ENCODE measurements at regions of chr21 and their contacts with region 1.

Region 1: GRCh38 chr21:29217818-29218291 is 80.9 kb upstream of the BACH1 start:
- DNase-seq: peak; percentile 90
- H3K4me3 Mint-ChIP-seq: no peak overlapping the region
- H3K27ac Mint-ChIP-seq: peak overlapping the region; percentile 67
- H3K4me1 Mint-ChIP-seq: peaks cover 17% of the 10 kb centered on the region
- H3K27me3 Mint-ChIP-seq: no peaks in the 10 kb centered on the region
- CTCF ChIP-seq: no peak

Region 2: GRCh38 chr21:29195981-29196669 is 21.7 kb before region 1 on chr21:
- CTCF ChIA-PET with region 1: interaction called, 4 read pairs
- POLR2A ChIA-PET with region 1: no interaction called
- intact Hi-C with region 1: loop called (anchors 2 kb)
- DNase-seq: peak; percentile 94
- H3K4me3 Mint-ChIP-seq: peak overlapping the region; percentile 69
- H3K27ac Mint-ChIP-seq: peak overlapping the region; percentile 98
- H3K4me1 Mint-ChIP-seq: peaks cover 27% of the 10 kb centered on the region
- H3K27me3 Mint-ChIP-seq: no peaks in the 10 kb centered on the region
- CTCF ChIP-seq: peak; percentile 19

Region 3: DNA sequence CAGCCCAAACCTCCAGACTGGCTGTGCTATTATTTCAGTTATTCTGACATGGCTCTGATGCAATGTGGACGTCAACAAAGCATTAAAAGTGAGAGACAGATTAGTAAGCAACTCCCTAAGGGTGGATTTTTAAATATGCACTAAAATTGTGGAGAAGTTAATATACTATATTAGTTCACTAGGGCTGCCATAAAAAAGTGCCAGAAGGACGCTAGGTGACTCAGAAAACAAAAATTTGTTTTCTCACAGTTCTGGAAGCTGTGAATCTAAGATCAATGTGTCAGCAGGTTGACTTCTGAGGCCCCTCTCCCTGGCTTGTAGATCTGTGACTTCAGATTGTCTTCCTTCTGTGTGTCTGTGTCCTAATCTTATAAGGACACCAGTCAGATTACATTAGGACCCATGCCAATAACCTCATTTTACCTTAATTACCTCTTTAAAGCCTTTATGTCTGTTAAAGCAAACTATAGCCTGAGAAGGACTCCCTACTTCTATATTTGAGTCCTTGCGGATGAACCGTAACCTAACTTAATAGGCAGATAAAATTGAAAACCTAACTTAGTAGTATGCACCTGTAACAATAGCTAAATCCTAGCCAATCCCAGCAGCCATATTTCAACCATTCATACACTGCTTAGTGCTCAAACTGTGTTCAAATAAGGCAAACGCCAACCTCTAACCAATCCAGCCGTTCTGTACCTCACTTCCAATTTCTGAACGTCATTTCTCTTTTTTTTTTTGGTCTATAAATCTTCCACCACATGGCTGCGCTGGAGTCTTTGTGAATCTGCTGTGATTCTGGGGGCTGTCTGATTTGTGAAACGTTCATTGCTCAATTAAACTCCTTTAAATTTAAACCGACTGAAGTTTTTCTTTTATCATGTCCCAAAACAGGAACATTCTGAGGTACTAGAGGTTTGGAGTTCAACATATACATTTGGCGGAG is 15.0 kb after region 1 on chr21:
- CTCF ChIA-PET with region 1: no interaction called
- POLR2A ChIA-PET with region 1: interaction called, 10 read pairs
- intact Hi-C with region 1: no loop called
- DNase-seq: peak; percentile 56
- H3K4me3 Mint-ChIP-seq: no peak overlapping the region
- H3K27ac Mint-ChIP-seq: peak overlapping the region; percentile 89
- H3K4me1 Mint-ChIP-seq: peaks cover 40% of the 10 kb centered on the region
- H3K27me3 Mint-ChIP-seq: no peaks in the 10 kb centered on the region
- CTCF ChIP-seq: no peak